Sigmoid colon (tissue), 7 donors: ENCODE measurements at regions of chr11 and their contacts with region 1.

Region 1: GRCh38 chr11:3412837-3413236 is 33.9 kb upstream of the ZNF195 start:
- DNase-seq: no peak
- H3K4me3 ChIP-seq: no peak overlapping the region
- H3K27ac ChIP-seq: no peak overlapping the region
- H3K4me1 ChIP-seq: no peaks in the 10 kb centered on the region
- H3K27me3 ChIP-seq: no peaks in the 10 kb centered on the region
- CTCF ChIP-seq: no peak
- EP300 ChIP-seq: no peak
- POLR2A ChIP-seq: no peak

Region 2: GRCh38 chr11:2525146-2525861 is 887.5 kb before region 1 on chr11:
- intact Hi-C with region 1: no loop called
- DNase-seq: peak; percentile 53
- H3K4me3 ChIP-seq: no peak overlapping the region
- H3K27ac ChIP-seq: no peak overlapping the region
- H3K4me1 ChIP-seq: no peaks in the 10 kb centered on the region
- H3K27me3 ChIP-seq: peaks cover 0 to 7% (median 0%) of the 10 kb centered on the region in 3 donors
- CTCF ChIP-seq: no peak
- EP300 ChIP-seq: no peak
- POLR2A ChIP-seq: no peak

Region 3: GRCh38 chr11:3341298-3341697 is 71.5 kb before region 1 on chr11:
- intact Hi-C with region 1: loop called (anchors 10 kb)
- DNase-seq: no peak
- H3K4me3 ChIP-seq: no peak overlapping the region
- H3K27ac ChIP-seq: no peak overlapping the region
- H3K4me1 ChIP-seq: no peaks in the 10 kb centered on the region
- H3K27me3 ChIP-seq: peaks cover 0 to 3% (median 0%) of the 10 kb centered on the region in 3 donors
- CTCF ChIP-seq: peak in 3 of 4 experiments; percentile 36 to 42 (median 39)
- EP300 ChIP-seq: no peak
- POLR2A ChIP-seq: no peak

Region 4: DNA sequence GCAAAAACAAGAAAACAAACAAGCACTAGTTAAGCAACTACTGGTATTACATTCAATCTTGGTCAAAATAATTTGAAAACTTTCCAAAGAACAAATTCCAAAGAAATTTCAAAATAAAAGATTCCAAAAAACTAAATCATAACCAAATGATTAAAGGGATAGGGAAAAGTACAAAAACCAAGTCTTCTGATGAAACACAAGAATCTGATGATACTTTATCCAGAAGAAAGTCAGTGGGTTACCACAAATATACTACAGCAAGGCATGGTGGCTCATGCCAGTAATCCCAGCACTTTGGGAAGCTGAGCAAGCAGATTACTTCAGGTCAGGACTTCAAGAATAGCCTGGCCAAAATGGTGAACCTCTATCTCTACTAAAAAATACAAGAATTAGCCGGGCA is 325.4 kb after region 1 on chr11:
- intact Hi-C with region 1: no loop called
- DNase-seq: no peak
- H3K4me3 ChIP-seq: no peak overlapping the region
- H3K27ac ChIP-seq: no peak overlapping the region
- H3K4me1 ChIP-seq: no peaks in the 10 kb centered on the region
- H3K27me3 ChIP-seq: no peaks in the 10 kb centered on the region
- CTCF ChIP-seq: no peak
- EP300 ChIP-seq: no peak
- POLR2A ChIP-seq: no peak